Gastrocnemius medialis (tissue), 4 donors: ENCODE measurements at regions of chr17 and their contacts with region 1.

Region 1: GRCh38 chr17:61837175-61838051 is 25.9 kb downstream of the BRIP1 start:
- DNase-seq: peak in 1 of 2 donors; percentile 6
- ATAC-seq: no peak
- H3K4me3 ChIP-seq: no peak overlapping the region
- H3K27ac ChIP-seq: no peak overlapping the region
- H3K4me1 ChIP-seq: no peaks in the 10 kb centered on the region
- H3K27me3 ChIP-seq: no peaks in the 10 kb centered on the region
- CTCF ChIP-seq: peak; percentile 22 to 58 (median 34)
- POLR2A ChIP-seq: no peak

Region 2: DNA sequence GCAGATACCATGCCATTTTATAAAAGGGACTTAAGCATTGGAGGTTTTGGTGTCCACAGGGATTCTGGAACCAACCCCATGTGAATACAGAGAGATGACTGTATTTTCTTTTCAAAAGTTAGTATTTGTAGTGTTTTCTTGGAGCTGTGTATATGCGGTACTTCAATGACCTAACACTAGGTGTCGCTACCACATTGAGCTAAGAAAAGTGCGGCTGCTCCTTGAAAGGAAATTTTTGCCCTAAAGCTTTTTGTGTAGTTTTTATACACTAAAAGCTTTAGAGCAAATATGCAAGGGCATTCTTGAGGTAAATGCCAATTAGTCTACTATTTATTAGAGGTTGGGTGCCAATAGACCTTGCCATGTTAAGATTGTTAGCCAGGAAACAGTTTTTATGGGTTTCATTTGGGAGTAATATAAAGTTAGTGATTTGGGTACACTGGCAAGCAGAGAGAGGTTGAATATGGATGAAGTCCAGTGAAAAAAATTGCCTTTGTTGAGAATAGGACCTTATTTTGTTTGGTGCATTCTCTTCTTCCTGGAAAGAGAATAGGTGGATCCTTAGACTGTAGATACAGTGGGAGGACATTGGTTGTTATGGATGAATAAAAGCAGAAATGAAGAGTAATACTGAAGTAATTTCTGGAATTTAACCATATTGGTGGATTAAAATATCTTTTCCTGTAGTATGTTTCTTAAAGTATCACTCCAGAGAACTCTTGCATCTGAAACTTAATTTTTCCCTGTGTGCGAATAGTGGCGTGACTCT is 1116.5 kb before region 1 on chr17:
- in situ Hi-C with region 1: loop called in 1 of 4 experiments (anchors 25 kb)
- intact Hi-C with region 1: no loop called
- DNase-seq: no peak
- ATAC-seq: peak in 1 of 2 donors; percentile 53
- H3K4me3 ChIP-seq: no peak overlapping the region
- H3K27ac ChIP-seq: no peak overlapping the region
- H3K4me1 ChIP-seq: peaks cover 0 to 3% of the 10 kb centered on the region in 2 donors
- H3K27me3 ChIP-seq: no peaks in the 10 kb centered on the region
- CTCF ChIP-seq: peak; percentile 56 to 88 (median 70)
- POLR2A ChIP-seq: no peak

Region 3: DNA sequence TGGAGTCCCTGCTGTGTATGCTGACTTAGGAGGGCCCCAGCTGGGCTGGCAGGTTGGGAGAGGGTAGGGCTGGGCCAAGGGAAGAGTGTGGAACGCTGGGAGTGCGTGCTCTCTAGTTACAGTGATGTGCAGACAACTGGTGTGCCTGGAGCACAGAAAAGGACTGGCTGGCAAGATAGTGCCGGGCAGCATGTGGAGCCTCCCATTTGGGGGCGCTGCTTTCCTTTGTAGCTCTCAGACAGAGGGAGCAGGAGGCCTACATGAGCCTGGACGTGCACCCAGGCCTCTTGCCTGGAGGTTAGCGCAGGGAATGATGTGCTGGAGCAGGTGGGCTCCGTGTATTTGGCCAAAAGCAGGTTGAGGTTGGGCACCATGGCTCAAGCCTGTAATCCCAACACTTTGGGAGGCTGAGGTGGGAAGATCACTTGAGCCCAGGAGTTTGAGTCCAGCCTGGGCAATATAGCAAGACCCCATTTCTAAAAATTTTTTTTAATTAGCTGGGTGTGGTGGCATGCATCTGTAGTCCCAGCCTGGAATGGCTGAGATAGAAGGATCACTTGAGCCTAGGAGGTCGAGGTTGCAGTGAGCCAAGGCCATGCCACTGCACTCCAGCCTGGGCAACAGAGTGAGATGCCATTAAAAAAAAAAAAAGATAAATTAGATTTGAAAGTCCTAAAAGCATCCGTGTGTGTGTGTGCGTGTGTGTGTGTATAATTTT is 411.2 kb before region 1 on chr17:
- in situ Hi-C with region 1: loop called (anchors 10 to 25 kb)
- intact Hi-C with region 1: no loop called
- DNase-seq: no peak
- ATAC-seq: no peak
- H3K4me3 ChIP-seq: no peak overlapping the region
- H3K27ac ChIP-seq: no peak overlapping the region
- H3K4me1 ChIP-seq: no peaks in the 10 kb centered on the region
- H3K27me3 ChIP-seq: peaks cover 2 to 23% (median 14%) of the 10 kb centered on the region in 3 donors
- CTCF ChIP-seq: no peak
- POLR2A ChIP-seq: no peak